ENCODE measurements at regions of chr18 and their contacts with region 1.

Region 1: DNA sequence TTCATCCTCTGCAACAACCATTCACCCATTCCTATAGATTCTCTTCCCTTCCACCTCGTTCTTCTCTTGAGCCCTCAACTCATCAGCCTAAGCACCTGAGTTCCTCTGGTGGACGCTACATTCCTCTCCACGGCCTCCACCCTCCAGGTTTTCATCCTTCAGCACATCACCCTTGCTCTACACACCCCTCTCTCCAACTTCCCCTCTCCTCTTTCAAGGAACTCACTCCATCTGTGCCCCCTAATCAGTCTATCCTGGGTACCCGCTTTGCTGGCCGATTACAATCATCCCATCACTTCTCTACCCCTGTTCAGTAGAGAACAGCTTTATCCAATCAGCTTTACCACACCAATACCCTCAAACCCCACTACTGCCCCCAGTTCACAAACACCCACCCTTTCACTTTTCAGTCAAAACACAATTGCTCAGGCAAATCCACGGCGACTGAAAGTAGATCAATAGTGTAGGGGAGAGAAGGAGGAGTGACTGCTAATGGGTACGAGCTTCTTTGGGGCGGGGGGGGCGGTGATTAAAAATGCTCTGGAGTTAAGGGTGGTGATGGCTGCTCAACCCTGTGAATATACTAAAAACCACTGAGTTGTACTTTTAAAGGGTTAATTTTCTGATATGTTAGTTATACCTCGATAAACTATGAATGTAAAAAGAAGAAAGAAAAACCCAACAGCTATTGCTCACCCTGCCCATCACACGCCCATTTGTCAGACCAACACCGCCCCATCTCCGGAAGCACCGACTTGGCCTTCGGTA is 857 bp downstream of the DYM start:
- DNase-seq: no peak
- ATAC-seq: peak; percentile 51
- H3K4me3 ChIP-seq: peak overlapping the region; percentile 77 to 90
- H3K27ac ChIP-seq: peak overlapping the region; percentile 61; the same call in 1 of the 2 replicates
- H3K4me1 ChIP-seq: peaks cover 7 to 18% of the 10 kb centered on the region in 2 experiments; a peak in 3 of 4 replicates
- H3K27me3 ChIP-seq: no peaks in the 10 kb centered on the region
- CTCF ChIP-seq: no peak
- POLR2A ChIP-seq: no peak
- RAD21 ChIP-seq: no peak

Region 2: DNA sequence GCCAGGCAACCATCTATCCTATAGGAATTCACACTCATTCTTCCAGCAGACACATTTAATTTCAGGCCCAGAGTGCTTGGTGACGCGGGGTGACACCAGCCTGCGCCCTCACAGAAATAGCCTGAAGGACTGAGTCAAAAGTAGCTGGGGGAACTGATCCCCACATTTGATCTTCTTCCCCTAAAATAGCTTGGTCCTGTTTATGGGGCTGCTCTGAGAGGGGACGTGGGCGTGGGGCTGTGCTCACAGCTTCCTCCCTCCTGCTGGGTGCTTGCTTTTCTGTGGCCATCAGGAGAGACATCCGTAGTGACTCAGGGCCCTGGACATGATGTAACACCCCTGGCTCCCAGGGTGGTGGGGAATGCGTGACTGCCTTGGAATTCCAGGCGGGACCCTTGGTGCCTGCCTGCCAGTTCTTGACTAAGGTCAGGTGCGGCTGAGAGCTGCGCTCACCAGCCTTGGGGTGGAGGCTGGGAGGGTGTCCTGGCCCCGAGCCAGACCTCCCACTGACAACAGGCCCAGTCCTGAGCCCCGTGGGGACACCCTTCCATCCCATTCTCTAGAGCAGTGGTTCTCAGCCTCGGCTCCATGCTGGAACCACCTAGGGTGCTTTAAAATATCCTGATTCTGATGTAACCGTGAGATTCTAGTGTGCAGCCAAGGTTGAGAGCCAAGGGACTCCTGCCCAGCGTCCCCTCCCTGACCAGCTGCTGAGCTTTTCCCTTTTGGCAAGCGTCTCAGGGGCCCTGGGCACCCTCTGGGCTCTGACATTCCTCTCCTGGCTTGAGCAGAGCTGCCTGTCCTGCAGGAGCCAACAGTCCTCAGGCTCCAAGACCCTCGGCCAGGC is 461.4 kb before region 1 on chr18:
- CTCF ChIA-PET with region 1: no interaction called
- POLR2A ChIA-PET with region 1: no interaction called
- RAD21 ChIA-PET with region 1: no interaction called
- intact Hi-C with region 1: no loop called
- DNase-seq: peak; percentile 91
- ATAC-seq: peak; percentile 81
- H3K4me3 ChIP-seq: peak overlapping the region; percentile 6 to 46
- H3K27ac ChIP-seq: peak overlapping the region; percentile 57
- H3K4me1 ChIP-seq: peaks cover 31 to 55% of the 10 kb centered on the region in 2 experiments
- H3K27me3 ChIP-seq: no peaks in the 10 kb centered on the region; the same call in 1 of the 2 replicates
- CTCF ChIP-seq: no peak
- POLR2A ChIP-seq: no peak
- RAD21 ChIP-seq: no peak

Region 3: DNA sequence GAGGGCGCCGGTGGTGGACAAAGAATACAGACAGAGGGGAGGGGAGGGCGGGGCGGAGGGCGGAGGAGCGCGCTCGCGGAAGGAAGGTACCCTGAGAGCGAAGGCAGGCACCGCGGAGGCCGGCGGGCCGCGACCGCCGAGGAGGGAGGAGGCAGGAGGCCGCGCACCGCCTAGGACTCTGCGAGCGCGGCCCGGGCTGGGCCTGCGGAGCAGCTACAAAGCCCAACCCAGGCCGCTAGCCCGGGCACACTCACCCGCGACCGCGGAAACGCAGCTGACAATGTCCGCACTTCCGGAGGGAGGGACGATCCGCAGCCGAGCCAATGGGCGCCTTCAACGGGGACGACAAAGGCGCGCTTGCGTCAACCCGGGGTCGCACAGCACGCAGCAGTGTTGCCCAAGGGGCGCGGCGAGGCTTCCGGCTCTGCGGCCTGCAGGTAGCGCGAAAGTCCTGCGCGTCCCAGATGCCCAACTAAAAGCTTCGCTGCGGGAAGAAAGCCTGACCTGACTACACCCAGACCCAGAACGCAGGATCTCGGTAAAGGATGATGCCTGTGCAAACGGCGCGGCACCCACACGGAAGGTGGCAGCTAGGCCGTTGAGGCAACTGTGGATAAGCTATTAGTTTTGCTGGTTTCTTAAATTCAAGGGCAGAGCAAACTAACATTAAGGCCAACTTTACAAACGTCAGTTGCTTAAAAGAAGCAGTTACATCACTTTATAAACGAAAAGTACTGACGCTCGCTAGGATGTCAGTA is 27.5 kb after region 1 on chr18 and contains the start of gene C18orf32:
- CTCF ChIA-PET with region 1: no interaction called
- POLR2A ChIA-PET with region 1: interaction called, 12 read pairs
- RAD21 ChIA-PET with region 1: no interaction called
- intact Hi-C with region 1: no loop called
- DNase-seq: peak; percentile 83
- ATAC-seq: peak; percentile 92
- H3K4me3 ChIP-seq: peak within 1 kb of the TSS; percentile 78 to 95
- H3K27ac ChIP-seq: peak within 1 kb of the TSS; percentile 76
- H3K4me1 ChIP-seq: peaks cover 10 to 46% of the 10 kb centered on the region in 2 experiments; a peak in 3 of 4 replicates
- H3K27me3 ChIP-seq: no peaks in the 10 kb centered on the region
- CTCF ChIP-seq: no peak
- POLR2A ChIP-seq: peak; percentile 81
- RAD21 ChIP-seq: no peak
- total RNA-seq, gene C18orf32: 35.0 TPM

Region 4: GRCh38 chr18:49510393-49511115 is 51.0 kb after region 1 on chr18:
- CTCF ChIA-PET with region 1: no interaction called
- POLR2A ChIA-PET with region 1: no interaction called
- RAD21 ChIA-PET with region 1: no interaction called
- intact Hi-C with region 1: no loop called
- DNase-seq: peak; percentile 73
- ATAC-seq: peak; percentile 97
- H3K4me3 ChIP-seq: no peak overlapping the region
- H3K27ac ChIP-seq: no peak overlapping the region
- H3K4me1 ChIP-seq: no peaks in the 10 kb centered on the region
- H3K27me3 ChIP-seq: no peaks in the 10 kb centered on the region
- CTCF ChIP-seq: peak; percentile 87 to 93 (median 88)
- POLR2A ChIP-seq: no peak
- RAD21 ChIP-seq: peak; percentile 97

Region 5: GRCh38 chr18:50268022-50268747 is 808.6 kb after region 1 on chr18:
- CTCF ChIA-PET with region 1: no interaction called
- POLR2A ChIA-PET with region 1: no interaction called
- RAD21 ChIA-PET with region 1: no interaction called
- intact Hi-C with region 1: no loop called
- DNase-seq: no peak
- ATAC-seq: peak; percentile 77
- H3K4me3 ChIP-seq: no peak overlapping the region
- H3K27ac ChIP-seq: no peak overlapping the region
- H3K4me1 ChIP-seq: no peaks in the 10 kb centered on the region
- H3K27me3 ChIP-seq: no peaks in the 10 kb centered on the region
- CTCF ChIP-seq: peak in 2 of 3 experiments; percentile 34; a peak in 4 of 6 replicates
- POLR2A ChIP-seq: no peak
- RAD21 ChIP-seq: no peak